Transverse colon (tissue), 4 donors: ENCODE measurements at regions of chr10 and their contacts with region 1.

Region 1: DNA sequence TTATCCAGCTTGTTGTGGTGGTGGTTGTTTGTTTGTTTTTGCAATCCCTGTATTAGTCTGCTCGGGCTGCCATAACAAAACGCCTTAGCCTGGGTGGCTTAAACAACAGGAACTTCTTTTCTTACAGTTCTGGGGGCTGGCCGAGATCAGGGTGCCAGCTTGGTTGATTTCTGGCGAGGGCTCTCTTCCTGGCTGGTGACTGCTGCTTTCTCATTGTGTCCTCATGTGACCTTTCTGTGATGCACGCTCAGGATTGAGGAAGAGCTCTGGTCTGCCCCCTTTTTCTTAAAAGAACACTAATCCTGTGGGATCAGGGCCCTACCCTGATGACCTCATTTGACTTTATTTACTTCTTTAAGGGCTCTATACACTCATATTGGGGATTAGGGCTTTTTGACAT is 107.1 kb upstream of the NRP1 start:
- DNase-seq: no peak
- H3K4me3 ChIP-seq: no peak overlapping the region
- H3K27ac ChIP-seq: no peak overlapping the region
- H3K4me1 ChIP-seq: no peaks in the 10 kb centered on the region
- H3K27me3 ChIP-seq: no peaks in the 10 kb centered on the region
- CTCF ChIP-seq: no peak
- EP300 ChIP-seq: no peak
- POLR2A ChIP-seq: no peak

Region 2: DNA sequence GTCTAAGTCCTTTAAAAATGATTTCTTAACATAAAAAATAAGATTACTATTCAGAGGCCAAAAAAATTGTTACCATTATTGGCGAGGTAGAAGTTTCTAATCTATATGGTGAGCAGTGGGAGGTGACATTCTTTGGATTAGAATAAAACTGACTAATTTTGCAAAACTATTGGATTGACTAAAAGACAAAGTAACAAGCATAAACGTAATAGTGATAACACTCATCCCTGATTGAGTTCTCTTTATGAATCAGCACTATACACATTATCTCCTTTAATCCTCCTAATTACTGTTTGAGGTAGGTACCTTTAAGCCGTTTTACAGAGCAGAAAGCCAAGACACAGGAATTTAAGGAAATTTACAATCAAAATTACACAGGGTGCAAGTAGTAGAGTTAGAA is 32.1 kb after region 1 on chr10:
- in situ Hi-C with region 1: no loop called
- intact Hi-C with region 1: loop called (anchors 1 kb)
- DNase-seq: no peak
- H3K4me3 ChIP-seq: no peak overlapping the region
- H3K27ac ChIP-seq: no peak overlapping the region
- H3K4me1 ChIP-seq: peaks cover 0 to 3% (median 0%) of the 10 kb centered on the region in 4 donors
- H3K27me3 ChIP-seq: no peaks in the 10 kb centered on the region
- CTCF ChIP-seq: no peak
- EP300 ChIP-seq: no peak
- POLR2A ChIP-seq: no peak